ENCODE measurements at regions of chr11 and their contacts with region 1.

Region 1: GRCh38 chr11:57527056-57527631 is 3.4 kb downstream of the TIMM10 start:
- DNase-seq: peak; percentile 93
- H3K4me3 ChIP-seq: no peak overlapping the region
- H3K27ac ChIP-seq: no peak overlapping the region
- H3K4me1 ChIP-seq: peaks cover 13 to 23% (median 21%) of the 10 kb centered on the region in 4 donors
- H3K27me3 ChIP-seq: no peaks in the 10 kb centered on the region
- CTCF ChIP-seq: peak; percentile 92 to 93 (median 92)
- EP300 ChIP-seq: no peak
- POLR2A ChIP-seq: no peak

Region 2: DNA sequence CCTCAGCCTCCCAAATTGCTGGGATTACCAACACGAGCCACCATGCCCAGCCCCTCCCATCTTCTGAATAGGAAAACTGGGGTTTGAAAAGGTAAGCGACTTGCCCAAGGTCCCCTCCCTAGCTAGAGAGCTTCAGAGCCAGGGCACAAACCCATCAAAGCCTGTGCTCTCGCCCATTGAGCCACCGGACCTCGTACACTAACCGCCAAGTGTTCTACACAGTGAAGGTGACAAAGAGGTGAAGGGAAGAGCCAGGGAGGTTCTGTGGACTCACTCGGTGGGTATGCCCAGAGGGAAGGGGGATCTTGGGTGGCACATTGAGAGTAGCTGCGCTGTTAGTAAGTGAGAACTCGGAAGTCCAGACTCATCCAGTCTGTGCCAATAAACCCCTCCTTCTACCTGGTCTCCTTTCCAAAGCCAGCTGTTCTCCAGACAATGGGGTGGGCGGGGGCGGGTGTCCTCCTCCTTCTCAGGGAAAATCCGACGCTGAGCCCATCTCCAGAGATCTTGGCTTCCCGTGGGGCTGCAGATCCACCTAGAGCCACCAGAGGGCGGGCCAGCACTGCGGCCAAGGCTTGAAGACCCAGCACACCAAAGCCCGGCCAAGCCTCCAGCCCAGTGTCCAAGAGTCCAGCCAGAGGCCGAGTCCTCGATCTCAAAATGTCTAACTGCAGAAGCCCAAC is 70.0 kb before region 1 on chr11:
- intact Hi-C with region 1: loop called (anchors 2 kb)
- DNase-seq: peak; percentile 98
- H3K4me3 ChIP-seq: peak overlapping the region in 2 of 4 donors; percentile 52 to 64
- H3K27ac ChIP-seq: no peak overlapping the region
- H3K4me1 ChIP-seq: peaks cover 35 to 45% (median 45%) of the 10 kb centered on the region in 4 donors
- H3K27me3 ChIP-seq: peaks cover 0 to 63% (median 29%) of the 10 kb centered on the region in 4 donors
- CTCF ChIP-seq: peak in 2 of 3 experiments; percentile 98 to 99
- EP300 ChIP-seq: no peak
- POLR2A ChIP-seq: no peak

Region 3: GRCh38 chr11:57493507-57494503 is 33.3 kb before region 1 on chr11:
- intact Hi-C with region 1: loop called (anchors 1 kb)
- DNase-seq: no peak
- H3K4me3 ChIP-seq: no peak overlapping the region
- H3K27ac ChIP-seq: no peak overlapping the region
- H3K4me1 ChIP-seq: peaks cover 3 to 6% (median 5%) of the 10 kb centered on the region in 4 donors
- H3K27me3 ChIP-seq: no peaks in the 10 kb centered on the region
- CTCF ChIP-seq: peak; percentile 84 to 92 (median 87)
- EP300 ChIP-seq: no peak
- POLR2A ChIP-seq: no peak

Region 4: DNA sequence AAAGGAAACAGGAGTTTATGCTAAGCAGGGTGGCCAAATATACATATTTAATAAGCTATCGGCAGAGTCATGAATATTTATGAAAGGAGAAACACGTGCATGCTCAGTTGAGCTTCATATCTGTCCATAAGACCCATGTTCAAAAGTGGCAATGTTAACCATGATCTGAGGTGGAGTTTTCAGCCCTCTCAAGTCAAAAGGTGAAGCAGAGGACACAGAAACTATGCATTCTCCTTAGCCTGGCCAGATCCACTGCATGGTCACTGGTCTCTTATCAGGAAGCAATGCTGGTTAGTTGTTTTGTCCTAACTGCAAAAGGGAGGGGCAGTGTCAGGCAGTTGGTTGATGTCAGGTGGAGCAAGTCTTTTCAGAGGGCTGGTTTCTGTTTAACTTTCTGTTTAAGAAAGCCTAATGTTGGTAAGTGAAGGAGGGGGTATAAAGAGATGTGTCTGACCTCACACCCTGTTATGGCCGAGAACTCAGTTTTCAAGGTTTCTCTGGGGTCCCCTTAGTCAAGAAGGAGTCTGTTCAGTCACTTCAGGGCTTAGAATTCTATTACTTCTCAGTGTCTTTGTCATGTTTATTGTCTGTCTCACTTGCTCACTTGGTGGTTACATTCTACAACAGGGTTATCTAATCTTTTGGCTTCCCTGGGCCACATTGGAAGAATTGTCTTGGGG is 208.6 kb after region 1 on chr11:
- intact Hi-C with region 1: no loop called
- DNase-seq: no peak
- H3K4me3 ChIP-seq: no peak overlapping the region
- H3K27ac ChIP-seq: no peak overlapping the region
- H3K4me1 ChIP-seq: peaks cover 0 to 5% (median 3%) of the 10 kb centered on the region in 4 donors
- H3K27me3 ChIP-seq: no peaks in the 10 kb centered on the region
- CTCF ChIP-seq: no peak
- EP300 ChIP-seq: no peak
- POLR2A ChIP-seq: no peak

Region 5: GRCh38 chr11:57778318-57779037 is 251.3 kb after region 1 on chr11:
- intact Hi-C with region 1: no loop called
- DNase-seq: peak; percentile 96
- H3K4me3 ChIP-seq: peak overlapping the region; percentile 5 to 33 (median 27)
- H3K27ac ChIP-seq: peak overlapping the region; percentile 75 to 82 (median 78)
- H3K4me1 ChIP-seq: peaks cover 98 to 100% (median 100%) of the 10 kb centered on the region in 4 donors
- H3K27me3 ChIP-seq: no peaks in the 10 kb centered on the region
- CTCF ChIP-seq: no peak
- EP300 ChIP-seq: no peak
- POLR2A ChIP-seq: no peak